SK-N-SH (cell line): ENCODE measurements at regions of chr12 and their contacts with region 1.

Region 1: GRCh38 chr12:56987551-56988053 is 18.7 kb downstream of the ZBTB39 start:
- DNase-seq: peak; percentile 84
- H3K4me3 ChIP-seq: peak overlapping the region in 1 of 2 experiments; percentile 4; a peak in 1 of 4 replicates
- H3K27ac ChIP-seq: no peak overlapping the region
- H3K4me1 ChIP-seq: peaks cover 0 to 2% of the 10 kb centered on the region in 2 experiments; a peak in 2 of 4 replicates
- H3K27me3 ChIP-seq: no peaks in the 10 kb centered on the region
- CTCF ChIP-seq: peak; percentile 87
- EP300 ChIP-seq: no peak
- RAD21 ChIP-seq: peak; percentile 89

Region 2: DNA sequence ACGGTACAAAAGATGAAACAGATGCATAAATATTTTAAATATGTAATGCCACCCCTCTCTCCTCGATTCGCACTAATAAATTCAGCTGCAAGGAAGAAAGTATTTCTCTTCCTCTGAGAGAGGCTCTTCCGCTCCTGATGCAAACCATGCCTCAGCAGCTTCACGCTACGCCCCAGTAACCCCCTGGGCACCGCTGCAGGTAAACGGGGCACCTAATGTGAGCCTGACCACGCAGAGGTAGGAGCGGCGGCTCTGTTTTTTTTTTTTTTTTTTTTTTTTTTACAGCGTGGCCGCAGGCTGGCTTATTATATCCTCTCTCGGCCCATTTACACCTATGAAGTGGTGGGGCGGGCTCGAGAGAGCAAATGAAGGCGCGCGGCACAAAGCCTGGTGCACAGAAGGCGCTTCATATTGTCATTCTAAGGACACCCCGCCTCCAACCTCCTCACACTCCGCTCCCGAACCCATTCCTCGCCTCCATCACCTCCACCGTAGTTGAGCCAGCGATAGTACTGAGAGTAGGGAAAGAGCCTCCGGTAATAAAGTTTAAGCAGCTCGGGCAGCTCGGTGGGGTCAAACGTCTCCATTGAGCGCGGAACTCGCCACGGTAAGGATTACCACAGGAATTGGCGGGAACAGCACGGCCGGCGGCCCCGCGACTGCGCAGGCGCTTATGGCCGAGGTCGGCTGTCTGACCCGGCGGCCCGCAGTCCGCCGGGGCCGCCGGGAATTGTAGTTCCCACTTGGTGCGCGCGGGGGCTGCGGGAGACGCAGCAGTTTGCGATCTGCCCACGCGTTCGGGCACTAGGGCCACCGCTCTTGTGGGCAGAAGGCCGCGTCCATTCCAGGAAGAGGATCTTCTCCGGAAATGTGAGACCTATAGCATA is 235.6 kb before region 1 on chr12 and contains the start of gene PRIM1:
- CTCF ChIA-PET with region 1: interaction called, 60 read pairs
- POLR2A ChIA-PET with region 1: no interaction called
- DNase-seq: peak; percentile 96
- H3K4me3 ChIP-seq: peak within 1 kb of the TSS; percentile 69 to 78
- H3K27ac ChIP-seq: peak within 1 kb of the TSS; percentile 44 to 72
- H3K4me1 ChIP-seq: no peaks in the 10 kb centered on the region; a peak in 1 of 4 replicates
- H3K27me3 ChIP-seq: no peaks in the 10 kb centered on the region
- CTCF ChIP-seq: no peak
- EP300 ChIP-seq: no peak
- RAD21 ChIP-seq: no peak
- polyA plus RNA-seq, gene PRIM1: 10.3 and 10.9 TPM in 2 replicates

Region 3: GRCh38 chr12:56763753-56764657 is 223.6 kb before region 1 on chr12:
- CTCF ChIA-PET with region 1: interaction called, 60 read pairs
- POLR2A ChIA-PET with region 1: no interaction called
- DNase-seq: no peak
- H3K4me3 ChIP-seq: no peak overlapping the region
- H3K27ac ChIP-seq: no peak overlapping the region
- H3K4me1 ChIP-seq: no peaks in the 10 kb centered on the region
- H3K27me3 ChIP-seq: no peaks in the 10 kb centered on the region
- CTCF ChIP-seq: no peak
- EP300 ChIP-seq: no peak
- RAD21 ChIP-seq: no peak

Region 4: GRCh38 chr12:56839915-56840325 is 147.7 kb before region 1 on chr12:
- CTCF ChIA-PET with region 1: interaction called, 10 read pairs
- POLR2A ChIA-PET with region 1: no interaction called
- DNase-seq: peak; percentile 23
- H3K4me3 ChIP-seq: no peak overlapping the region
- H3K27ac ChIP-seq: no peak overlapping the region
- H3K4me1 ChIP-seq: peaks cover 0 to 3% of the 10 kb centered on the region in 2 experiments; a peak in 2 of 4 replicates
- H3K27me3 ChIP-seq: no peaks in the 10 kb centered on the region; the same call in 1 of the 2 replicates
- CTCF ChIP-seq: peak; percentile 45
- EP300 ChIP-seq: no peak
- RAD21 ChIP-seq: peak; percentile 60

Region 5: DNA sequence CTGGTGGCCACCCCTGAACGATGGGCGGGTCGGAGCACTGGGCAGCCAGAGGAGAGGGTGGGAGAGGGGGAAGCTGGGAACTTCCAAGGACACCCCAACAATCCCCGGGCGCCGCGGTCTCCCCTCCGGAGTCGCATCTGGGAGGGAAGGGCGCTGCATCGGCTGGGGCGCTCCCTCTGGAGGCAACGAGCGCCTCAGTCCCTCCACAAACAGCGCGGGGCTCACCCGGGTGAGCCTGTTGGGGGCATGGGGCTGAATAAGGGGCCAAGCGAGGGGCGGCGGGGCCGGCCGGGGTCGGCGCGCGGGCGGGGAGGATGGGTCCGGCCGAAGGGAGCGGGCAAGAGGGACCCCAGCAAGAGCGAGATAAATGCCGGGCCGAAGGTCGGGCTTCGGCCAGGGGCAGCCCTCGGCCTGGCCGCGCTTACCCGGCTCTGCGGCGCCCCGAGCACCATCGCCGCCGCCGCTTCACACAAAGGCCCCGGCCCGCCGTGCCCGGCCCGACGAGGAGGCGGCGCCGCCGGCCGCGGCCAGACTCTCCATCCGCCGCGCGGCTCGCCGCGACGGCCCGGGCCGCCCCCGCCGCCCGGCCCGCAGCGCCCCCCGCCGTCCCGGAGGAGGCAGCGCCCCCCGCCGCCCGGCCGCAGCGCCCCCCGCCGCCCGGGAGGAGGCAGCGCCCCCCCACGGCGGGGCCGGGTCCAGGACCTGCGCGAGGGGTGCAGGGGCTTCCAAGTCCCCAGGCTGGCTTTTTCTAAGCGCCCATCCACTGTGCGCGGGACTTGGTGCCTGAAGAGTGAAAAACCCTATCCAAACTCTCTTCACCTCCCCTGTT is 18.6 kb after region 1 on chr12 and contains the start of gene ZBTB39:
- CTCF ChIA-PET with region 1: interaction called, 69 read pairs
- POLR2A ChIA-PET with region 1: no interaction called
- DNase-seq: peak; percentile 99
- H3K4me3 ChIP-seq: peak within 1 kb of the TSS; percentile 89 to 100
- H3K27ac ChIP-seq: peak within 1 kb of the TSS; percentile 34 to 69; a peak in 2 of 4 replicates
- H3K4me1 ChIP-seq: peaks cover 6 to 14% of the 10 kb centered on the region in 2 experiments; a peak in 3 of 4 replicates
- H3K27me3 ChIP-seq: no peaks in the 10 kb centered on the region
- CTCF ChIP-seq: peak; percentile 69
- EP300 ChIP-seq: no peak
- RAD21 ChIP-seq: no peak
- polyA plus RNA-seq, gene ZBTB39: 3.7 and 4.8 TPM in 2 replicates

Region 6: GRCh38 chr12:57549909-57550640 is 562.5 kb after region 1 on chr12 and contains the start of gene KIF5A:
- CTCF ChIA-PET with region 1: no interaction called
- POLR2A ChIA-PET with region 1: no interaction called
- DNase-seq: peak; percentile 92
- H3K4me3 ChIP-seq: peak within 1 kb of the TSS; percentile 90 to 94
- H3K27ac ChIP-seq: peak within 1 kb of the TSS in 1 of 2 experiments; percentile 86; a peak in 1 of 4 replicates
- H3K4me1 ChIP-seq: peaks cover 13 to 42% of the 10 kb centered on the region in 2 experiments
- H3K27me3 ChIP-seq: no peaks in the 10 kb centered on the region
- CTCF ChIP-seq: peak; percentile 28
- EP300 ChIP-seq: no peak
- RAD21 ChIP-seq: no peak
- polyA plus RNA-seq, gene KIF5A: 6.2 and 8.9 TPM in 2 replicates